ENCODE measurements at regions of chr17 and their contacts with region 1.

Region 1: DNA sequence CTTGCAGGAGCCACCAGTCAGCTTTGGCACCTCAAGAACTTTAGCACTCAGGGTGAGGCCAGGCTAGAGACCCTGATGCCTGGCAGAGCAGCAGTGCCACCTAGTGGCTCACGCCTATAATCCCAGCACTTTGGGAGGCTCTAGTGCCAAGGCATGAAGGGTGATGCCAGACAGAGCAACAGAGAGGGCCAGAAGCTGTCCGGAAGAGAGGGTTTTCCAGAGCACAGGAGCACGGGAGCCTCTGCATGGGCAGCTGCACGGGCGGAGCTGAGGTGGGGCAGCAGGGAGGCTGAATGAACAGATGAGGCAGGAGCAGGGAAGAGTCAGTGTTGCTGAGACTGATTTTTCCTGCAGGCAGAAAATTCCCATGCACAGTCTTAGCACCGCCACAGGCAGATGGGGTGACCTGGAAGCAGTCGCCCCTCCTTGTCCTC is 38.9 kb downstream of the MYH3 start:
- DNase-seq: peak; percentile 78
- H3K4me3 ChIP-seq: no peak overlapping the region
- H3K27ac ChIP-seq: no peak overlapping the region
- H3K4me1 ChIP-seq: no peaks in the 10 kb centered on the region
- H3K27me3 ChIP-seq: no peaks in the 10 kb centered on the region
- CTCF ChIP-seq: peak; percentile 47 to 70 (median 62)
- POLR2A ChIP-seq: no peak

Region 2: DNA sequence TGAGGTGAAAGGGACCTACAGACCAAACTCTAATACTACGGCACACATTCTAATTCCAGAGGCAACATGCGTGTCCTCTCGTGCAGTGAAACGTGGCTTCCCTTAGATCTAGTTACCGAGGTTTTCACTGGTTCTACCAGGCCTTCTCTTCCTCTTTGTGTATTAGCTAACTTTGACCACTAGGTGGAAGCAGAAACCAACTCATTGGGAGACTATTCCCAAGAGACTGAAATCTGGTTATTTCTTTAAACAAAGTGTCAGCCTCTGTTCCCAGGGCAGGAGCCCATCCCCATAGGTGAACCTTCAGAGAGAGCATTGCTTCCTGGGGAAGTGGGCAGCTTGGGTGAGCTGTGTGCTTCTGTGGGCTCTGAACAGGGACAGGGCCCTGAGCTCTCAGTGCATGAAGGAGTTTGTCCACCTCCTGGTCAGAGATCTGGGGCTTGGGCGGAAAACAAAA is 693.5 kb before region 1 on chr17:
- intact Hi-C with region 1: loop called (anchors 10 kb)
- DNase-seq: peak; percentile 25
- H3K4me3 ChIP-seq: no peak overlapping the region
- H3K27ac ChIP-seq: no peak overlapping the region
- H3K4me1 ChIP-seq: no peaks in the 10 kb centered on the region
- H3K27me3 ChIP-seq: no peaks in the 10 kb centered on the region
- CTCF ChIP-seq: peak; percentile 81 to 91 (median 85)
- POLR2A ChIP-seq: no peak

Region 3: GRCh38 chr17:10327640-10328039 is 290.6 kb before region 1 on chr17:
- intact Hi-C with region 1: loop called (anchors 5 kb)
- DNase-seq: peak; percentile 97
- H3K4me3 ChIP-seq: no peak overlapping the region
- H3K27ac ChIP-seq: no peak overlapping the region
- H3K4me1 ChIP-seq: no peaks in the 10 kb centered on the region
- H3K27me3 ChIP-seq: no peaks in the 10 kb centered on the region
- CTCF ChIP-seq: peak; percentile 90 to 96 (median 95)
- POLR2A ChIP-seq: no peak

Region 4: DNA sequence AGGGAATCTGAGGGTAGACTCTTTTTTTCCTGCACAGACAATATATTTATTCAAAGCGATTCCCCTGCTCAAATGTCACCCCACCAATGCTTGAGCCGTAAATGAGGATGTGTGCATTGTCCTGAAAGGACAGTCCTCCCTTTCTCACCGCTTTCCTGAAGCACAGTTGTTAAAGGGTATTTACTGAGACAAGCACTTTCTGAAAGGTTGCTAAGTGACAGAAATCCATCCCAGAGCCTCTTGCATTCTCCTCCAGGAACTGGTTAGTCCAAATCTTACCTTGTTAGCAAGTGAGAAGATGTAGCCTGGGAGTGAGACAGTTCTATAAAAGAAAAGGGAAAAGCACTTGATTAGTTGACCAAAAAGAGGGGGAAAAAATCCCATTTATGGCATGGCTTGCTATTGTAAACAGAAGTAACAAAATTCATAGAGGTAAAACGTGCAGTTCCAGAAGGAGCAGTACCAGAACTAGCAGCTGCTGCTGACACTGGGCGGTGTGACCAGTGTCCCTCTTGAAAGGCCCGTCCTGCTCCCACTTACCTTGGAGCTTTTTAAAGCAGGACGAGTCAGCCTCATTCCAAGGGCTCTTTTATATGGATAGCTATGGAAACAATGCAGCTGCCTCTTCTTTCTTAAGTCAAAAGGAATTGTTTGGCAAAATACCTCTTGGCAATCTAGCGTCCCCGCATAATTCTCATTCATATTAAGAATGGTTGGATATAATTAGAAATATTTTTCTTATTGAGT is 69.0 kb before region 1 on chr17 and contains the start of gene MYH2:
- intact Hi-C with region 1: no loop called
- DNase-seq: no peak
- H3K4me3 ChIP-seq: no peak within 1 kb of the TSS
- H3K27ac ChIP-seq: no peak within 1 kb of the TSS
- H3K4me1 ChIP-seq: no peaks in the 10 kb centered on the region
- H3K27me3 ChIP-seq: no peaks in the 10 kb centered on the region
- CTCF ChIP-seq: no peak
- POLR2A ChIP-seq: no peak
- total RNA-seq, gene MYH2: 0.31 to 0.99 TPM

Region 5: GRCh38 chr17:10737168-10737622 is 119.0 kb after region 1 on chr17:
- intact Hi-C with region 1: no loop called
- DNase-seq: peak; percentile 75
- H3K4me3 ChIP-seq: no peak overlapping the region
- H3K27ac ChIP-seq: no peak overlapping the region
- H3K4me1 ChIP-seq: peaks cover 5% of the 10 kb centered on the region
- H3K27me3 ChIP-seq: no peaks in the 10 kb centered on the region
- CTCF ChIP-seq: peak; percentile 39 to 69 (median 62)
- POLR2A ChIP-seq: no peak

Region 6: DNA sequence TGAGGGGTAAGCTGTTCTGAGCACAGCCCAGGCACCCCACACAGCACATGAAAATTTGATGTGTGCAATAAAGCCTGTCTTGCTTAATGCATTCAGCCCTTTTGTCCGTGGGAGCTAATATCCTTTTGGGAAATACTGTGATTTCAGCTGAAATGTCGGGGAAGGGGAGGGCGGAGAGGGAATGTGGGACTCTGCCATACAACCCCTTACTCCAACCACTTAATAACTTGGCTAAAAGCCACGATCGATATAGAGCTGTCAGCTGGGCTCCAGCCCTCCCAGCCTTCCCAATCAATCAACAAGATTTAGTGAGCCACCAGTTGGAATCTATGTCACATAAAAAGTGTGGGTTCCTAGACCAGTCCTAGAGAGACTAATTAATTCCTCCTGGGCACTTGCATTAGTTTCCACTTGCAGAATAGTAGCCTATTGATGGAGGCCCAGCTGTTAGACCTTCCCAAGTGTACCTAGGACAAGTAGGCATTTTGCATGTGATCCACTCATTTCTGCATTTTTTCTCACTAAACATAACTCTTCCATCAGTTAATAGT is 302.4 kb after region 1 on chr17:
- intact Hi-C with region 1: no loop called
- DNase-seq: no peak
- H3K4me3 ChIP-seq: no peak overlapping the region
- H3K27ac ChIP-seq: no peak overlapping the region
- H3K4me1 ChIP-seq: no peaks in the 10 kb centered on the region
- H3K27me3 ChIP-seq: no peaks in the 10 kb centered on the region
- CTCF ChIP-seq: no peak
- POLR2A ChIP-seq: no peak